ENCODE measurements at regions of chr9 and their contacts with region 1.

Region 1: GRCh38 chr9:92790542-92791527 is 26.2 kb upstream of the BICD2 start:
- DNase-seq: peak; percentile 83
- ATAC-seq: peak; percentile 91
- H3K4me3 Mint-ChIP-seq: no peak overlapping the region
- H3K27ac Mint-ChIP-seq: no peak overlapping the region
- H3K4me1 Mint-ChIP-seq: peaks cover 5% of the 10 kb centered on the region
- H3K27me3 Mint-ChIP-seq: peaks cover 7% of the 10 kb centered on the region

Region 2: GRCh38 chr9:92716557-92716956 is 74.3 kb before region 1 on chr9:
- CTCF ChIA-PET with region 1: interaction called, 90 read pairs
- POLR2A ChIA-PET with region 1: no interaction called
- DNase-seq: peak; percentile 88
- ATAC-seq: peak; percentile 76
- H3K4me3 Mint-ChIP-seq: no peak overlapping the region
- H3K27ac Mint-ChIP-seq: no peak overlapping the region
- H3K4me1 Mint-ChIP-seq: peaks cover 22% of the 10 kb centered on the region
- H3K27me3 Mint-ChIP-seq: no peaks in the 10 kb centered on the region

Region 3: GRCh38 chr9:92764988-92765936 is 25.6 kb before region 1 on chr9:
- CTCF ChIA-PET with region 1: interaction called, 13 read pairs
- POLR2A ChIA-PET with region 1: no interaction called
- DNase-seq: peak; percentile 98
- ATAC-seq: peak; percentile 91
- H3K4me3 Mint-ChIP-seq: peak overlapping the region; percentile 94
- H3K27ac Mint-ChIP-seq: peak overlapping the region; percentile 95
- H3K4me1 Mint-ChIP-seq: peaks cover 47% of the 10 kb centered on the region
- H3K27me3 Mint-ChIP-seq: no peaks in the 10 kb centered on the region

Region 4: GRCh38 chr9:92770360-92770995 is 20.4 kb before region 1 on chr9:
- CTCF ChIA-PET with region 1: interaction called, 13 read pairs
- POLR2A ChIA-PET with region 1: no interaction called
- DNase-seq: no peak
- ATAC-seq: no peak
- H3K4me3 Mint-ChIP-seq: no peak overlapping the region
- H3K27ac Mint-ChIP-seq: peak overlapping the region; percentile 75
- H3K4me1 Mint-ChIP-seq: peaks cover 23% of the 10 kb centered on the region
- H3K27me3 Mint-ChIP-seq: peaks cover 2% of the 10 kb centered on the region

Region 5: GRCh38 chr9:92870289-92870688 is 79.5 kb after region 1 on chr9:
- CTCF ChIA-PET with region 1: no interaction called
- POLR2A ChIA-PET with region 1: no interaction called
- DNase-seq: no peak
- ATAC-seq: no peak
- H3K4me3 Mint-ChIP-seq: no peak overlapping the region
- H3K27ac Mint-ChIP-seq: no peak overlapping the region
- H3K4me1 Mint-ChIP-seq: peaks cover 14% of the 10 kb centered on the region
- H3K27me3 Mint-ChIP-seq: no peaks in the 10 kb centered on the region

Measured in activated CD8-positive, alpha-beta T cell treated with anti-CD3 and anti-CD28 coated beads, Interleukin-2, amount 10 ng/mL, durations not matched to agents 7 days and 5 days (primary cell).